ENCODE measurements at regions of chr3 and their contacts with region 1.

Region 1: DNA sequence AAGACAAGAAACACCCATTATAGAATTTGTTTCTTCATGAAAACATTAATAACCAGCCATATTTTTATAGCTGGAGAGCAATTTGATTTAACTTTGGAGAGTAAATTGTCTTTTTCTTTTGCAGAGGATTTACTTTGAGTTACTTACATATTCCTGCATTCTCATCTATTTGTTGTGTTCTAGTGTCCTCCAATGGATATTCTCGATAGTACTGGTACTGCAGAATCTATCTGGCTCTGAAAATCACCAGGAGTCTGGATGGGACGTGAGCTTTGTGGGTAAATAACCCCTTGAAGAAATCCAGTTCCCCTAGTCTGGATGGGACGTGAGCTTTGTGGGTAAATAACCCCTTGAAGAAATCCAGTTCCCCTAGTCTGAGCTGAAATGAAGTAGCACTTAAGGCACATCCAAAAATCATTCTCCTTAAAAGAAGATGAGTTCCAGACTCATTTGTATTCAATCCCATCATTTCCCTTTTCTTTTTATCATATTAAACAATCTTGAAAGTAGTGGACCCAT is 294.1 kb upstream of the UBE2E2 start:
- DNase-seq: no peak
- H3K4me3 ChIP-seq: no peak overlapping the region
- H3K27ac ChIP-seq: no peak overlapping the region
- H3K4me1 ChIP-seq: no peaks in the 10 kb centered on the region
- H3K27me3 ChIP-seq: no peaks in the 10 kb centered on the region
- CTCF ChIP-seq: no peak

Region 2: GRCh38 chr3:22835041-22835440 is 74.0 kb before region 1 on chr3:
- intact Hi-C with region 1: no loop called
- DNase-seq: no peak
- H3K4me3 ChIP-seq: no peak overlapping the region
- H3K27ac ChIP-seq: no peak overlapping the region
- H3K4me1 ChIP-seq: no peaks in the 10 kb centered on the region
- H3K27me3 ChIP-seq: no peaks in the 10 kb centered on the region
- CTCF ChIP-seq: no peak

Region 3: DNA sequence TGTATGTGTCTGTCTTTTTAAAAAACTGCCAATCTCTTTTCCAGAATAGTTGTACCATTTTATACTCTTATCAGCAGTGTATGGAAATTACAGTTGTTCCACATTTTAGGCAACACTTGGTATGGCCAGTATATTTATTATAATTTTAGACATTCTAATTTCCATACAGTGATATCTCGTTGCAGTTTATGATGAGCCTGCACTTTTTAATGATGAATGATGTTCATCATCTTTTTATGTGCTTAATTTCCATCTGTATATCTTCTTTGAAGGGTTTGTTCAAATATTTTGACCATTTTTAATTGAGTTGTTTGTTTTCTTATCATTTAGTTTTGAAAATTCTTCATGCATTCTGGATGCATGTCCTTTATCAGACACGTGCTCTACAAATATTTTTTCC is 237.1 kb after region 1 on chr3:
- intact Hi-C with region 1: no loop called
- DNase-seq: no peak
- H3K4me3 ChIP-seq: no peak overlapping the region
- H3K27ac ChIP-seq: no peak overlapping the region
- H3K4me1 ChIP-seq: no peaks in the 10 kb centered on the region
- H3K27me3 ChIP-seq: no peaks in the 10 kb centered on the region
- CTCF ChIP-seq: no peak

Region 4: DNA sequence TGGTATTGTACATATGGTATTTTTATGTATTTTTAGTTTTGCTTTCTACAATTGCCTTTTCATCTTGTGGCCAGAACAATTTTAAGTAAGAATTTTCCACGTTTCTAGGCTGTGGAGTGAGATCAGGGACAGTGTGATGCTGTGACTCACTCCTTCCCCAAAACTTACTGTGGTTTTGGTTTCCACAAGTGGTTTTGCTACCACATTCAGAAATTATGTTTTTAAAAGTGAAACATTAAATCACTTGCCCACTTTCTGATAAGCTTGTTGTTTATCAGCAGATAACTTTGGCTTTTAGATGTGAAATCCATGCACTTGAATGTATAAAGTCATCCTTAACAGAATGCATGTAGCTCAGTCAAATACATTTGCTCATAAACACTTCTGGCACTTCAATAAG is 1777.8 kb after region 1 on chr3:
- intact Hi-C with region 1: loop called (anchors 5 kb)
- DNase-seq: no peak
- H3K4me3 ChIP-seq: no peak overlapping the region
- H3K27ac ChIP-seq: peak overlapping the region in 1 of 2 donors; percentile 28
- H3K4me1 ChIP-seq: peaks cover 0 to 14% (median 3%) of the 10 kb centered on the region in 4 donors
- H3K27me3 ChIP-seq: no peaks in the 10 kb centered on the region
- CTCF ChIP-seq: no peak